Naive thymus-derived CD4-positive, alpha-beta T cell (primary cell): ENCODE measurements at regions of chr7 and their contacts with region 1.

Region 1: GRCh38 chr7:64665980-64666662 is at the start of gene ZNF107:
- DNase-seq: peak; percentile 48 to 90 (median 84)
- ATAC-seq: peak; percentile 98
- H3K4me3 ChIP-seq: peak within 1 kb of the TSS; percentile 92
- H3K4me3 Mint-ChIP-seq: peak within 1 kb of the TSS; percentile 92 to 98 (median 96)
- H3K27ac ChIP-seq: peak within 1 kb of the TSS; percentile 96
- H3K27ac Mint-ChIP-seq: peak within 1 kb of the TSS; percentile 96 to 98 (median 97)
- H3K4me1 ChIP-seq: peaks cover 11 to 19% of the 10 kb centered on the region in 2 donors
- H3K4me1 Mint-ChIP-seq: peaks cover 18 to 79% (median 71%) of the 10 kb centered on the region in 7 donors
- H3K27me3 ChIP-seq: no peaks in the 10 kb centered on the region
- H3K27me3 Mint-ChIP-seq: no peaks in the 10 kb centered on the region
- total RNA-seq, gene ZNF107: 11.2 to 33.5 (median 17.3) TPM

Region 2: DNA sequence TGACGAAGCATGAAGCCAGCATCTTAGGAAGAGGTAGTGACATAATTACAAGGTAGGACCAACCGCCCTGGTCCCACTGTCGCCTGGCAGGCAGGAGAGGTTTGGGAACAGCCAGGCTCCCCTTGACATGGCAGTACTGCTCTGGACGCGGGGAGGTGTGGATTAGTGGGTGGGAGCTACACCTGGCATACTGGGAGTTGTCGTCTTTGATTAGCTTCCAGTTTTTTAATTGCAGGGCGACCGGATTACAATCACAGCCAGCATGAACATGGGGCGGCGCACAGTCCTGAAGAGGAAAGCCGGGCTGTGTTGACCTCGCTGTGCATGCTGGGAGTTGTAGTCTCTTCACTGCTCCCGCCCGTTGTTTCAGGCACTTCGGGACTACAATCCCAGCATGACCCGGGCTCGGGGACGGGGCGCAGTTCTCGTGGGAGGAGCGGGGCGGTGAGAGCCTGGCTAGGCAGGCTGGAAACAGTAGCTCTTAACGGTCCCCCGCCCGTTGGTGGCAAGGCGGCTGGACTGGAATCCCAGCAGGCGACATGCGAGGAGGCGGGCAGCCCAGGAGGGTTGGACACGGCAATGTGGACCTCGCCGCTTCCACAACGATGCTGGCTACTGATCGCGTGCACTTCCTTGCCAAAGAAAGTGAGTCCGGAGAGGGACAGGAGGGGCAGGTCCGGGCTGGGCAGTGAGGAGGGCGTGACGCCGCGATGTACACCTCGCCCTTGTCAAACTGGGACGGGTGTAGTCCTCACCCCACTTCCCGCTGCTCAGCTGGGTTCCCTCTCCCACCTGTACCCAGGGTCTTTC is 765.5 kb before region 1 on chr7:
- CTCF ChIA-PET with region 1: no interaction called
- POLR2A ChIA-PET with region 1: no interaction called
- intact Hi-C with region 1: loop called in 1 of 2 experiments (anchors 1 kb)
- DNase-seq: peak; percentile 64 to 95 (median 91)
- ATAC-seq: peak; percentile 97
- H3K4me3 ChIP-seq: peak overlapping the region; percentile 84
- H3K4me3 Mint-ChIP-seq: peak overlapping the region; percentile 82 to 100 (median 98)
- H3K27ac ChIP-seq: peak overlapping the region; percentile 89
- H3K27ac Mint-ChIP-seq: peak overlapping the region; percentile 88 to 99 (median 95)
- H3K4me1 ChIP-seq: no peaks in the 10 kb centered on the region
- H3K4me1 Mint-ChIP-seq: peaks cover 0 to 22% (median 9%) of the 10 kb centered on the region in 7 donors
- H3K27me3 ChIP-seq: no peaks in the 10 kb centered on the region
- H3K27me3 Mint-ChIP-seq: peaks cover 0 to 4% (median 0%) of the 10 kb centered on the region in 5 donors

Region 3: DNA sequence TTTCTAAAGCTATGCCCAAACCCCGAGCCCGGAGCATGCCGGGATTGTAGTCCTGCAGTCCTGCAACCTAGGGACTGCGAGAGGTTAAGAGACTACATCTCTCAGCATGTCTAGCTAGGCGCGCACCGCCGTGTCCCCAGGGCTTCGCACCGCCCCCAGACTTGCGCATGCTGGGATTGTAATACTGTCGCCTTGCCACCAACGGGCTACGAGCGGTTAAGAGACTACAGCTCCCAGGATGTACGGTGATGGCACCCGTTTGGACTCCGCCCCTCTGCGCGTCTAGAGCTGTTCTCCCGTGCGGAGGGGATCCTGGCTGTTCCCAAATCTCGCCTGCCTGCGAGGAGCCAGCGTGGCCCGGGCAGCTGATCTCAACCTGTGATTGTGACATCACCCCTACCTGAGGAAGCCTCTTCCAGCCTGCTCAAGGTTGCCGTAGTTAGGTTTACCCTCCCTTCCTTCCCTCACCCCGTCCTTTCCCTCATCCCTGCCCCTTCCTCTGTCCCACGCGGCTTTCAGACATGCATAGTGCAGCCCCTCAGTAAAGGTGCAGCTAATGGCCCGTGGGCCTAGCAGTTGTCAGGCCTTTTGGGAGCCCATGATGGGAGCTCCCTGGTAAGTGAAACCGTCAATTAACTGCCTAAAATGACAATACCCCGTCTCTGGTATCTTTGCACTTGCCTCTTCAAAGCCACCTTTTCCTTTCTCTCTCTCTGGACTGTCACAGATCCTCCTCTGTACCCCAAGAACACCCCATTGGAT is 358.7 kb before region 1 on chr7:
- CTCF ChIA-PET with region 1: no interaction called
- POLR2A ChIA-PET with region 1: interaction called, 5 read pairs
- intact Hi-C with region 1: loop called (anchors 1 kb)
- DNase-seq: peak; percentile 76 to 95 (median 93)
- ATAC-seq: peak; percentile 99
- H3K4me3 ChIP-seq: peak overlapping the region; percentile 95
- H3K4me3 Mint-ChIP-seq: peak overlapping the region; percentile 90 to 100 (median 96)
- H3K27ac ChIP-seq: peak overlapping the region; percentile 83
- H3K27ac Mint-ChIP-seq: peak overlapping the region; percentile 94 to 99 (median 97)
- H3K4me1 ChIP-seq: peaks cover 0 to 13% of the 10 kb centered on the region in 2 donors
- H3K4me1 Mint-ChIP-seq: peaks cover 13 to 30% (median 19%) of the 10 kb centered on the region in 7 donors
- H3K27me3 ChIP-seq: no peaks in the 10 kb centered on the region
- H3K27me3 Mint-ChIP-seq: no peaks in the 10 kb centered on the region

Region 4: DNA sequence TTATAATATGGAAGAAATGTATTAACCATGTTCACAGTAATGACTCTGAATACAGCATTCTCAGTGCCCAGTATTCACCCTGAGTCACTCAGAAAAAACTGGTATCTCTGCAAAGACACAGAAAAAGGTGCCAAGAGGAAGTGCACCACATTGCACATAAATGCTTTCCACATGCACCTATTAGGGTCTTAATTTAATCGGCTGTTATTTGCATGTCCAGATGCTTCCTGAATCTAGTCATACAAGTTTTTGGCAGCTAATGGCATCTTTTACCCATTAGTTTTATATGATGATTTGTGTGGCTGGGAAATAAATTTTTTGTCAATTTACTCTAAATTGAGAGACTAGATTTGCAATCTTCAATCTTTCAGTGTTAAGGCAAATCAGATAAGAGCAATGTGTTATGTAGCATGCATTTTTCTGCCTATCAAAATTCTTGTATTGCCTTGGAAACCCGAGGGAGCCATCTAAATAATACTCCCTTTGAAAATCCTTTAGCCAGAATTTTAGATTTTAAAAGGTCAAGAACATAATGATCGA is 161.5 kb before region 1 on chr7:
- CTCF ChIA-PET with region 1: no interaction called
- POLR2A ChIA-PET with region 1: no interaction called
- intact Hi-C with region 1: no loop called
- DNase-seq: no peak
- ATAC-seq: no peak
- H3K4me3 ChIP-seq: no peak overlapping the region
- H3K4me3 Mint-ChIP-seq: no peak overlapping the region
- H3K27ac ChIP-seq: no peak overlapping the region
- H3K27ac Mint-ChIP-seq: no peak overlapping the region
- H3K4me1 ChIP-seq: no peaks in the 10 kb centered on the region
- H3K4me1 Mint-ChIP-seq: no peaks in the 10 kb centered on the region
- H3K27me3 ChIP-seq: no peaks in the 10 kb centered on the region
- H3K27me3 Mint-ChIP-seq: no peaks in the 10 kb centered on the region

Region 5: GRCh38 chr7:64630496-64630895 is 35.6 kb before region 1 on chr7:
- CTCF ChIA-PET with region 1: no interaction called
- POLR2A ChIA-PET with region 1: no interaction called
- intact Hi-C with region 1: loop called in 1 of 2 experiments (anchors 5 kb)
- DNase-seq: peak in 3 of 9 donors; percentile 9 to 12 (median 11)
- ATAC-seq: peak; percentile 48
- H3K4me3 ChIP-seq: no peak overlapping the region
- H3K4me3 Mint-ChIP-seq: no peak overlapping the region
- H3K27ac ChIP-seq: no peak overlapping the region
- H3K27ac Mint-ChIP-seq: no peak overlapping the region
- H3K4me1 ChIP-seq: no peaks in the 10 kb centered on the region
- H3K4me1 Mint-ChIP-seq: no peaks in the 10 kb centered on the region
- H3K27me3 ChIP-seq: no peaks in the 10 kb centered on the region
- H3K27me3 Mint-ChIP-seq: no peaks in the 10 kb centered on the region

Region 6: GRCh38 chr7:65373608-65374351 is 707.7 kb after region 1 on chr7 and contains the start of gene ZNF92:
- CTCF ChIA-PET with region 1: no interaction called
- POLR2A ChIA-PET with region 1: interaction called, 7 read pairs
- intact Hi-C with region 1: loop called (anchors 2 to 5 kb)
- DNase-seq: peak; percentile 84 to 95 (median 94)
- ATAC-seq: peak; percentile 99
- H3K4me3 ChIP-seq: peak within 1 kb of the TSS; percentile 87
- H3K4me3 Mint-ChIP-seq: peak within 1 kb of the TSS; percentile 90 to 98 (median 96)
- H3K27ac ChIP-seq: peak within 1 kb of the TSS; percentile 82
- H3K27ac Mint-ChIP-seq: peak within 1 kb of the TSS; percentile 87 to 96 (median 93)
- H3K4me1 ChIP-seq: peaks cover 8 to 21% of the 10 kb centered on the region in 2 donors
- H3K4me1 Mint-ChIP-seq: peaks cover 18 to 57% (median 49%) of the 10 kb centered on the region in 7 donors
- H3K27me3 ChIP-seq: no peaks in the 10 kb centered on the region
- H3K27me3 Mint-ChIP-seq: no peaks in the 10 kb centered on the region
- total RNA-seq, gene ZNF92: 16.3 to 22.5 (median 19.3) TPM